ENCODE measurements at regions of chr4 and their contacts with region 1.

Region 1: GRCh38 chr4:136680271-136680670 is 852.0 kb downstream of the PCDH18 start:
- DNase-seq: no peak
- H3K4me3 ChIP-seq: no peak overlapping the region
- H3K27ac ChIP-seq: no peak overlapping the region
- H3K4me1 ChIP-seq: peaks cover 0 to 3% (median 1%) of the 10 kb centered on the region in 4 donors
- H3K27me3 ChIP-seq: no peaks in the 10 kb centered on the region
- CTCF ChIP-seq: no peak
- EP300 ChIP-seq: no peak
- POLR2A ChIP-seq: no peak

Region 2: GRCh38 chr4:136383082-136383481 is 297.2 kb before region 1 on chr4:
- in situ Hi-C with region 1: no loop called
- intact Hi-C with region 1: no loop called
- DNase-seq: no peak
- H3K4me3 ChIP-seq: no peak overlapping the region
- H3K27ac ChIP-seq: no peak overlapping the region
- H3K4me1 ChIP-seq: no peaks in the 10 kb centered on the region
- H3K27me3 ChIP-seq: no peaks in the 10 kb centered on the region
- CTCF ChIP-seq: no peak
- EP300 ChIP-seq: no peak
- POLR2A ChIP-seq: no peak

Region 3: DNA sequence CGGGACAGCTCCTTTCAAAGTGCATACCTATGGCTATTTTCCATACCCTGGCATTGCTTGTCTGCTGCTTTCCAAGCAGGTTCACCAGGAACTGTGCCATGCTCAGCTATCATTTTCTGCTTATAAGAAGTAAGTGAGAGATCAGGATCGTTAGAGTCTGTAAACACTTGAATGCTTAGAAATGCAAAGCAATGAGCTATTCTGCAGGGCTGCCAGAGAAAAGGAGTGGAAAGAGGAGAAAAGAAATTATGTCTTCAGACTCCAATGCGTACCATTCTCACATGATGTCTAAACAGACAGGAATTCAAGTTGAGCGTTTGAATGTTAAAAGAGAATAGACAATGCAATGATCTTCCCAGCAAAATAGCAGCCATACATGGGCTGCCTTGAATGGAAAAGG is 1807.4 kb after region 1 on chr4:
- in situ Hi-C with region 1: no loop called
- intact Hi-C with region 1: loop called (anchors 5 kb)
- DNase-seq: no peak
- H3K4me3 ChIP-seq: no peak overlapping the region
- H3K27ac ChIP-seq: no peak overlapping the region
- H3K4me1 ChIP-seq: no peaks in the 10 kb centered on the region
- H3K27me3 ChIP-seq: no peaks in the 10 kb centered on the region
- CTCF ChIP-seq: no peak
- EP300 ChIP-seq: no peak
- POLR2A ChIP-seq: no peak